CD4-positive, alpha-beta T cell (primary cell): ENCODE measurements at regions of chr1 and their contacts with region 1.

Region 1: DNA sequence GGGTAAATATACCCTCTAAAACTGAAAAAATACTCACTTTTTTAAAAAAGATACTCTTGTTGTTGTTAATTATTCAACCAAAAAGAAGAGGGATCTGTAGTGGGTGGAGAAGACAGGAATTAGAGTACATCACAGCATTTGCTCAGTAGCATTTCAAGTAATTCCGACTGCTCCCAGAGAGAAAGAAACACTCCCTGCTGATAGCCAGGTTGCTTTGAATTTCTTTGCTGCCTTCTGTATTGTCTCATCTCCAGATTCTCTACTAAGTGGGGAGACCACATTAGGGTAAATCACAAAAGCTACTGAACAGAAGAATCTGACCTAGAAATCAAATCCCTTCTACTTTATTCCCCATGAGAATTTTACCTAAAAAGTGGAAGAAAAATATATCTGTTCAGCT is 661.1 kb downstream of the BRINP3 start:
- DNase-seq: no peak
- ATAC-seq: no peak
- H3K4me3 ChIP-seq: no peak overlapping the region
- H3K4me3 Mint-ChIP-seq: no peak overlapping the region
- H3K27ac ChIP-seq: no peak overlapping the region
- H3K27ac Mint-ChIP-seq: no peak overlapping the region
- H3K4me1 ChIP-seq: no peaks in the 10 kb centered on the region
- H3K4me1 Mint-ChIP-seq: no peaks in the 10 kb centered on the region
- H3K27me3 ChIP-seq: no peaks in the 10 kb centered on the region
- H3K27me3 Mint-ChIP-seq: no peaks in the 10 kb centered on the region
- CTCF ChIP-seq: no peak

Region 2: DNA sequence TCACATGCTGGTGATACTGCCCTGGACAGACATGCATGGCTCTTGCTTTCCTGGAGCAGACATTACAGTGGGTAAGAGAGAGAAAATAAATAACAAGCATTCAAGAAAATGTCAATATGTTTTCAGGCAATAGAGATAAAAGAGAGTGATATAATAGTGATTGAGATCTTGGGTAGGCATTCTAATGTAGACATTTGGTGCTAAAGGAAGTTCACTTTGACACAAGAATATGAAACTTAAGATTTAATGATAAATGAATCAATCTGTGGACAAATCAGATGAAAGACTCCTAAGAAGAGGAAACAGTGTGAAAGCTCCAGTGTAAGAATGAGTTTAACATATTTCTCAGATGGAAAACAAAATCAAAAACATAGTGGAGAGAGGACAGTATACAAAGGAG is 75.8 kb before region 1 on chr1:
- CTCF ChIA-PET with region 1: no interaction called
- POLR2A ChIA-PET with region 1: no interaction called
- intact Hi-C with region 1: loop called in 1 of 2 experiments (anchors 10 kb)
- DNase-seq: no peak
- ATAC-seq: no peak
- H3K4me3 ChIP-seq: no peak overlapping the region
- H3K4me3 Mint-ChIP-seq: no peak overlapping the region
- H3K27ac ChIP-seq: no peak overlapping the region
- H3K27ac Mint-ChIP-seq: no peak overlapping the region
- H3K4me1 ChIP-seq: no peaks in the 10 kb centered on the region
- H3K4me1 Mint-ChIP-seq: no peaks in the 10 kb centered on the region
- H3K27me3 ChIP-seq: no peaks in the 10 kb centered on the region
- H3K27me3 Mint-ChIP-seq: no peaks in the 10 kb centered on the region
- CTCF ChIP-seq: no peak

Region 3: GRCh38 chr1:190792873-190793272 is 976.3 kb after region 1 on chr1:
- CTCF ChIA-PET with region 1: no interaction called
- POLR2A ChIA-PET with region 1: no interaction called
- intact Hi-C with region 1: no loop called
- DNase-seq: no peak
- ATAC-seq: no peak
- H3K4me3 ChIP-seq: no peak overlapping the region
- H3K4me3 Mint-ChIP-seq: no peak overlapping the region
- H3K27ac ChIP-seq: no peak overlapping the region
- H3K27ac Mint-ChIP-seq: no peak overlapping the region
- H3K4me1 ChIP-seq: no peaks in the 10 kb centered on the region
- H3K4me1 Mint-ChIP-seq: no peaks in the 10 kb centered on the region
- H3K27me3 ChIP-seq: no peaks in the 10 kb centered on the region
- H3K27me3 Mint-ChIP-seq: no peaks in the 10 kb centered on the region
- CTCF ChIP-seq: no peak